Activated CD4-positive, alpha-beta T cell treated with anti-CD3 and anti-CD28 coated beads, Interleukin-2, amount 10 ng/mL, durations not matched to agents 24 days and 14 days (primary cell): ENCODE measurements at regions of chr19 and their contacts with region 1.

Region 1: DNA sequence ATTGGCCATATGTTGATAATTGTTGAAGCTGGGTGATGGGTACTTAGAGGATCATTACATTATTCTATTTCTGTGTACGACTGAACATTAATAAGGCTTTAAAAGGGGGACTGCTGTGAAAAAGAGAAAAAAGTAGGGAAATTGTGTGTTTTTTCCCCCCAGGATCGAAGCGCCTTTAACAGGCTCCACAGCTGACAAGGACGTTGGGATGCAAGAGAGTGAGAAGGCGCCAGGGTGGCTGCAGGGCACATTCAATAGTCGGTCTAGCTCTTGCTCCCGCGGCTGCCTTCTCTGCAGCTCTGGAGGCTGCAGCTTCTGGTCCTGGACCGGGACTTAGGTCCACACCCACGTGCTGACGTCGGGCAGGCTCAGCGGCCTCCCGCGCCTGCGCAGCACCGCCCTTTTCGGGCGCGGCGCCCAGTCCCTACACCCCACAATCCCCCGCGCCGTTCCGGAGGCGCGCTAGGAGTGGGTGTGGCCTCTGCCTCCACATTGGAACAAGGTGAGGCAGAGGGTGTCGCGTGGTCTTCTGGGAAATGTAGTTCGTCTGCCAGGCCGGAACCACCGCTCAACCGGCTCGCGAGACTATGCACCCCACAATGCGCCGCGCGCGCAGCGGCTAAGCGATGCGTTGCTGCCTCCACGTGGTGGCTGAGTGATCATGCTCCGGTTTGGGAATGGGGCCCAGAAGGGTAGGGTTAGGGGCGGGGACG is 4.9 kb upstream of the LRFN3 start:
- DNase-seq: peak; percentile 100
- H3K4me3 Mint-ChIP-seq: peak overlapping the region; percentile 79
- H3K27ac Mint-ChIP-seq: peak overlapping the region; percentile 90
- H3K4me1 Mint-ChIP-seq: peaks cover 25% of the 10 kb centered on the region
- H3K27me3 Mint-ChIP-seq: no peaks in the 10 kb centered on the region

Region 2: DNA sequence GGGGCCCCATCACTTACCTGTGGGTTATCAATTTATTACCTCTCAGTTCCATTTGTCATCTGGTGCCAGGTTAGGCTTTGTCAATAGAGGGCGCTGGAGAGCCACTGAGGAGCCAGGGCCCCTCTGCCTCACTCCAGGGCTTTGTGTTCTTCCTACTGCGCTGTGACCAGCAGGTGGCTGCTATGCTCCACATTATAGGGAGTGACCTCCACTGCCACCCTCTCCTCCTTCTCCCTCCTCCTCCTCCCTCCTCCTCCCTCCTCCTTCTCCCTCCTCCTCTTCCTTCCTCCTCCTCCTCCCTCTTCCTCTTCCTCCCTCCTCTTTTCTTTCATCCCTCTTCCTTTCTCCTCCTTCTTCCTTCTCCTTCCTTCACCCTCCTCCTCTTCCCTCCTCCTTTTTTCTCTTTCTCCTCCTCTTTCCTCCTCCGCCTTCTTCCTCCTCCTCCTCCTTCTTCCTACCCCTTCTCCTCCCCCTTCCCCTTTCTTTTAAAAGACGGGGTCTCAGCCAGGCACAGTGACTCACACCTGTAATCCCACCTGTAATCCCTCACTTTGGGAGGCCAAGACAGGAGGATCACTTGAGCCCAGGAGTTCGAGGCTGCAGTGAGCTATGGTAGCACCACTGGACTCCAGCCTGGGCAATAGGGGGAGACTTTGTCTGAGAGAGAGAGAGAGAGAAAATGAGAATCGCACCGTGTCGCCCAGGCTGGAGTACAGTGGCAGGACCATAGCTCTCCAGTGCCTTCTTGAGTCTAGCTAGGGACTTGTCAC is 237.3 kb before region 1 on chr19:
- intact Hi-C with region 1: loop called (anchors 5 kb)
- DNase-seq: peak; percentile 97
- H3K4me3 Mint-ChIP-seq: no peak overlapping the region
- H3K27ac Mint-ChIP-seq: peak overlapping the region; percentile 35
- H3K4me1 Mint-ChIP-seq: peaks cover 14% of the 10 kb centered on the region
- H3K27me3 Mint-ChIP-seq: no peaks in the 10 kb centered on the region

Region 3: DNA sequence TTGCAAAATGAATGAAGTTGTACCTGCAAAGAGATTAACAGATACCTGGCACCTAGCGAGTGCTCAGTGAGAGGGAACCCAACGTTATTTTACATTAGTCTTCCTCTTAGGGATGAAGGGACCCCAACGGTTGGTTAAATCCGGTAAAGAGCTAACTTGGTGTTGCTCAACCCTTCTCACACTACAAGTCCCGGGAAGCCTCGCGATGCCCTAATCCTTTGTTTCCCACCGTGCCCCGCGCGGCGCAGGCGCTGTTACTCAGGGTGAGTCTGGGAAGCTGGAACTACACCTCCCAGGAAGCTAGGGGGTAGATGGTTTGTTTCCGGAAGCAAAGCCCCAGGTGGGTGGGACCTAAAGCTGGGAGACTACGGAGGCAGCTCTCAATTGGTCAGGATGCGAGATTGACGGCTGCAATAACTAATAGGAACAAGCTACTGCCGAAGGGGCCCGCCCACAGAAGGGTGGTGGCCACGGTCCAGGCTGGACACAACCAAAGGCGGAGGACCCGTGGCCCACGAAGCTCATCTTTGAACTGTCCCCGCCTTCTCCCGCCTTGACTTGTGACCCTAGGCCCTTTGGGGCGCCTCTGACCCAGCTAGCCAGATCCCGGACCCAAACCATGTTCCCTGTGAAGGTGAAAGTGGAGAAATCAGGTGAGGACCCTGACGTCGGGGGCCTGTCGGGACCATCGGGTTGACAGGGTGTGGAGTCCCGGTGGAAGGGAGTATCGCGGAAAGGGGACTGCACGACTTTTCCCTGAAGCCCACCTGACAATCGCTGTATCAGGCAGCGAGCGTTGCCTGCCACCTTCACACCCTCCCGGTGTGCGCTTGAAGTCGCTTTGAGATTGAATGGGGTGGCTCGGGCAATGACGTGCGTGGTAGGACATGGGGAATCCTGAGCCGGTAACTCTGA is 183.0 kb before region 1 on chr19 and contains the start of gene LIN37:
- intact Hi-C with region 1: loop called (anchors 1 kb)
- DNase-seq: peak; percentile 100
- H3K4me3 Mint-ChIP-seq: peak within 1 kb of the TSS; percentile 99
- H3K27ac Mint-ChIP-seq: peak within 1 kb of the TSS; percentile 95
- H3K4me1 Mint-ChIP-seq: peaks cover 37% of the 10 kb centered on the region
- H3K27me3 Mint-ChIP-seq: no peaks in the 10 kb centered on the region
- total RNA-seq, gene LIN37: 7.7 and 11.1 TPM in 2 replicates

Region 4: GRCh38 chr19:35775298-35776110 is 155.8 kb before region 1 on chr19 and contains the start of gene ARHGAP33:
- intact Hi-C with region 1: loop called (anchors 1 kb)
- DNase-seq: peak; percentile 100
- H3K4me3 Mint-ChIP-seq: peak within 1 kb of the TSS; percentile 88
- H3K27ac Mint-ChIP-seq: peak within 1 kb of the TSS; percentile 71
- H3K4me1 Mint-ChIP-seq: peaks cover 26% of the 10 kb centered on the region
- H3K27me3 Mint-ChIP-seq: no peaks in the 10 kb centered on the region
- total RNA-seq, gene ARHGAP33: 24.6 and 26.4 TPM in 2 replicates

Region 5: DNA sequence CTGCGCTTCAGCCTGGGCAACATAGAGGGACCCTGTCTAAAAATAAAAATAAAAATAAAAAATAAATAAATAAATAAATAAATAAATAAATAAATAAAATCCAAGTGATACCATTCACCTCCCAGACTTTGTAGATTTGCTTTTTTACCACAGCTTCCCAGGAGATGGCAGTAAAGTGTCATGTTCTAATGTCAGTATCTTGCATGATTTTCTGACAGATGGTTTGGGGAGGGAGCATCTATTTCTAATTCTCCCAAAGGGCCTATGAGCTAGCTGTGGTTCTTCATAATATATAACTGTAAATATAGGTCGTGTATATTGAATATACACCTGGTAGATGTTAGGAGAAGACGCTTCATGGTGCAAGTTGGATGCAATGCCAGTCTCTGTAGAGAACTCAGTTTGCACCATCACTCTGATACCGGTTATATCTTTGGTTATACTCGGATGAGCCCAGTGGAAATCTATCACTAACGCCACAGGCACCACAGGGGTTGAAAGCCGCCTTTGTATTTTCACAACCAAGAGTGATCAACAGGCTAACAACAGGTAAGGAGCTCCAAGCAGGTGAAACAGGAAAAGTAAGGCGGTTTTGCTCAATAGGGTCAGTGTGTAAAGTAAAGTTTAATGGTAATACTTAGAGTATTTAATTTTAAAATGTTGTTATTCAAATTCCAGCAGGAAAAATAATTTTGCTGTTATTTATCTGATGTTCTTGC is 49.0 kb before region 1 on chr19:
- intact Hi-C with region 1: loop called (anchors 1 kb)
- DNase-seq: peak; percentile 87
- H3K4me3 Mint-ChIP-seq: no peak overlapping the region
- H3K27ac Mint-ChIP-seq: no peak overlapping the region
- H3K4me1 Mint-ChIP-seq: peaks cover 10% of the 10 kb centered on the region
- H3K27me3 Mint-ChIP-seq: peaks cover 8% of the 10 kb centered on the region

Region 6: DNA sequence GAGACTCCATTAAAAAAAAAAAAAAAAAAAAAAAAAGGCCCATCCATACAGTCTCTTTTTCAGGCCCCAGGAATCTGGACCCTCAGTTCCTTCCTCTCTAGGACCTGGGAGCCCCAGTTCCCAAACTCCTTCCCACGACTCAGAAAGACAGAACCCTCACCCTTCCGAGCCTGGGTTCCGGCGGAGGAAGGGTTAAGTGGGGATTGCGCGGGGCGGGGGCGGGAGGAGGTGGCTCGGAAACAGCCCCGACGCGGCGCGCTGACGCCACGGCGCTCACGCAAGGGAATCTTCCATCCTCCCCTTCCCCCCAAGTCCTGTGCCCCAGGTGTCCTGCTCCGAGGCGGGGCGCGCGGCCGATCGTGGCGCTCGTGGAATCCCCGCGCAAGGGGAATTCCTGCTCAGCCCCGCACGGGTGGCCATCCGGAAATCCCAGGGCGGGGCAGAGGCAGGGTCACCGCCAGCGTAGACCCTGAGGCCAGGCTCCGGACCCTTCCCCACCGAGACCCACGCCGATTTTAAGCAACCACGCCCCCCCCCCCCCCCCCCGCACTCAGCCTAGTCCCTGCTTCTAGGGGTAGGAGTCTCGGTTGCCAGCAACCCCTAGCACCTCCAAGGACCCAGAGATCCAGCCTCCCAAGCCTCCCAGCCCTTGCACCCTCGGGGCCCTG is 31.6 kb before region 1 on chr19:
- intact Hi-C with region 1: loop called (anchors 1 kb)
- DNase-seq: peak; percentile 96
- H3K4me3 Mint-ChIP-seq: peak overlapping the region; percentile 98
- H3K27ac Mint-ChIP-seq: peak overlapping the region; percentile 98
- H3K4me1 Mint-ChIP-seq: peaks cover 50% of the 10 kb centered on the region
- H3K27me3 Mint-ChIP-seq: no peaks in the 10 kb centered on the region

Region 7: GRCh38 chr19:35986664-35987570 is 55.6 kb after region 1 on chr19:
- intact Hi-C with region 1: no loop called
- DNase-seq: peak; percentile 71
- H3K4me3 Mint-ChIP-seq: peak overlapping the region; percentile 74
- H3K27ac Mint-ChIP-seq: no peak overlapping the region
- H3K4me1 Mint-ChIP-seq: peaks cover 5% of the 10 kb centered on the region
- H3K27me3 Mint-ChIP-seq: peaks cover 42% of the 10 kb centered on the region

Region 8: DNA sequence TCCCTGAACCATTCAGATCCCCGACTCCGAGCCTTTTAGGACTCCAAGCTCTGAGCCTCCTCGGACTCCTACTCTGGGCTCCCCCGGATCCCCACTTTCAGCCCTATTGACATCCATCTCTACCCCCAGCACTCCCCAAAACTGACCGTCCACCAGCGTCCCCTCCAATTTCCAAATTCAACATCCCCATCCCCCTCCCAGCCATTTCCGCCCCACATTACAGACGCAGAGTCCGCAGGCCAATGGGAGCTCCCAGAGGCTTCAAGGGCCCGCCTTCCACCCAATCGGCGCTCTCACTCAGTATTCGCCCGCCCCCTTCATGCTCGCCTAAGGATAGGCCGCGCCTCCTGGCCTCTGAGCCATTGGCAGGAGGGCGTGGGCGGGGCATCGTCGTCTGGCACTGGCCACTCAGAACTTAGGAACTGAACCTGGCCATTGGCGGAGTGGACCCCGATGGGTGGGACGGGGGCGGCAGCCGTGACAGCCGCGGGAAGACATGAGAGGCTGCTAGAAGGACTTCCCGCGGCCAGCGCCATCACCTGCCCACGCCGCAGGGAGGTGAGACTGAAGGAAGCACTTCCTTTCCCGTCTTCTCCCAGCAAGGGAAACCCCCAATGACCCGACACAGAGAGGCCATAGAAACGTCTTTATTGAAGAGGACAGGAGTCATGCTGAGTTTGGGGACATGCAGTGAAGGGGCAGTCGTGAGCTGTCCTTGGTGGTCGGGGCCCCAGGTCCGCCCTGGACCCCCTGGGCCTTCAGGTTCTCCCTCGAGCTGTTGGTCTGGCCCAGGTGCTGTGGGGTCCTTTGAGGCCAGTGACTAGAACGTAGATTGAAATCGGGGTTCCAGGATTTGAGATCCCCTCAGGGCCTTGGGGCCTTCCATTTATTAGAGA is 83.0 kb after region 1 on chr19 and contains the start of gene ALKBH6:
- intact Hi-C with region 1: loop called (anchors 1 kb)
- DNase-seq: peak; percentile 100
- H3K4me3 Mint-ChIP-seq: peak within 1 kb of the TSS; percentile 97
- H3K27ac Mint-ChIP-seq: peak within 1 kb of the TSS; percentile 95
- H3K4me1 Mint-ChIP-seq: peaks cover 37% of the 10 kb centered on the region
- H3K27me3 Mint-ChIP-seq: no peaks in the 10 kb centered on the region
- total RNA-seq, gene ALKBH6: 46.1 and 50.7 TPM in 2 replicates